MCF 10A (cell line): ENCODE measurements at regions of chr9 and their contacts with region 1.

Region 1: GRCh38 chr9:111728621-111729366 is 65.9 kb downstream of the SHOC1 start:
- DNase-seq: peak; percentile 93
- H3K4me3 Mint-ChIP-seq: peak overlapping the region; percentile 35
- H3K27ac Mint-ChIP-seq: peak overlapping the region; percentile 88
- H3K4me1 Mint-ChIP-seq: peaks cover 21% of the 10 kb centered on the region
- H3K27me3 Mint-ChIP-seq: no peaks in the 10 kb centered on the region
- CTCF ChIP-seq: no peak

Region 2: DNA sequence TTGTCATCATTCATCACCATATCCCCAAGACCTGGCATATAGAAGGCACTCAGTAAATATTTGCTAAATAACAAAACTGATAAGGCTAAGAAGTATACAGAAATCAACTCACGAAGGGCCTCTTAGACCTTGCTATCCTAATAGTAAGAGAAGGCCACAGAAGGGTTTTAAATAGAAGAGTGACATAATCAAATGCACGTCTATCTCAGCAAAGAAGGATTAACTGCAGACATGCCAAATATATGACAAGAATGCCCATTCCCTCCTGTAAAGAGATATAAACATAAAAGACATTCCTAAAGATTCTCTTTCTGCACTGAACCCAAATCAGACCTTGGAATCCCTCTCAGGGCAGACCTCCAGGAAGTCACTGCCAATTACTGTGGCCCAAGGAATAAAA is 278.7 kb before region 1 on chr9:
- CTCF ChIA-PET with region 1: no interaction called
- POLR2A ChIA-PET with region 1: no interaction called
- intact Hi-C with region 1: no loop called
- DNase-seq: no peak
- H3K4me3 Mint-ChIP-seq: no peak overlapping the region
- H3K27ac Mint-ChIP-seq: no peak overlapping the region
- H3K4me1 Mint-ChIP-seq: peaks cover 16% of the 10 kb centered on the region
- H3K27me3 Mint-ChIP-seq: no peaks in the 10 kb centered on the region
- CTCF ChIP-seq: no peak

Region 3: DNA sequence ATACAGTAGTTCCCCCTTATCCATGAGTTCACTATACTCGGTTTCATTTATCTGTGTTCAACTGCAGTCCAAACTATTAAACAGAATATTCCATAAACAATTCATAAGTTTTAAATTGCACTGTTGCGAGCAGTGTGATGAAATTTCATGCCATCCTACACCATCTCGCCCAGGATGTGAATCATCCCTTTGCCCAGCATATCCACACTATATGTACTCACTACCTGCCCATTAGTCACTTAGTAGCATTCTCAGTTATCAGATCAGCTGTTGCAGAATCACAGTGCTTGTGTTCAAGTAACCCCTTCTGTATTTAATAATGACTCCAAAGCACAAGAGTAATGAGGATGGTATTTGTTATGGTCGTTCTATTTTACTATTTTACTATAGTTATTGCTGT is 14.5 kb after region 1 on chr9:
- CTCF ChIA-PET with region 1: interaction called, 4 read pairs
- POLR2A ChIA-PET with region 1: interaction called, 17 read pairs
- intact Hi-C with region 1: no loop called
- DNase-seq: peak; percentile 94
- H3K4me3 Mint-ChIP-seq: peak overlapping the region; percentile 53
- H3K27ac Mint-ChIP-seq: peak overlapping the region; percentile 99
- H3K4me1 Mint-ChIP-seq: peaks cover 17% of the 10 kb centered on the region
- H3K27me3 Mint-ChIP-seq: no peaks in the 10 kb centered on the region
- CTCF ChIP-seq: no peak